ENCODE measurements at regions of chr9 and their contacts with region 1.

Region 1: DNA sequence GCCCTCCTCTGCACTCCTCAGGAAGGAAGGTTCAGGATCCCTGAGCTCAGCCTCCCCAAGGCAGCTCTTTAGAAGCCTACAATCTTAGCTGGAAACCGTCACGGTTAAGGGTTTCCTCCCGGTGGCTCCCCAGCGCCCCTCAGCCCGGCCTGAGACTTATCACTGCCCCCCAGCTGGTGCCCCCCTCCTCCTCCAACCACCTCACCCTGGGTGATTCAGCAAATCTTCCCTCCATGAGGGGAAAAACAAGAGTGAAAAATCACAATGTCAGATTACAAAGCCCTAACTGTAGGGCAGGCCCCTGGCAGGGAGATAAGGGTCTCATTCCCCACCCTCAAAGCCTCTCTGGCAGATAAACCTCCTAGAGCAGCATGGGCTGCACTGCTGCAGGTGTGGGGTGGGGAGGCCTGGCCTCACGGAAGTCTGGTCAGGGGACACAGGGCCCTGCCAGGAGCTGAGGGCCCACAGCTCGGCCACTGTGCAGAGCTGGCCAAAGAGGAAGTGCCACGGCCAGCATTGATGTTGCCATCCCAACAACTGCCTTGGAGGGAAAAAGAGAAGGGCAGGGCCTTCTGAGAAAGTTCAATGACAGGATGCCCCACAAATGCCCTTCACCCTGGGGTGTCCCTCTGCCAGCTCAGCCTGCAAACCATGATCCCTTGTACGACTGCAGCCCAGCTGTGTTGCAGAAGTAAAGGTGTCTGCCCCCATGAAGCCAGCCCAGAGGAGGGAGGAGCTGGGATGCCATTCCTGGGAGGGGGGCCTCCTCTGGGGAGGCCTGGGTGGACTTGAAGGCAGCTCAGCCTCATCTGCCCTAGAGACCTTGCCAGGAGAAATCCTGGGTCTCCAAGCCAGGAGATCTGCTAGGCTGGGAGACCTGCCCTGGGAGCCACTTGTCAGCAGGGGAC is 25.9 kb downstream of the GFI1B start:
- DNase-seq: no peak

Region 2: GRCh38 chr9:133023117-133023890 is 19.0 kb after region 1 on chr9:
- CTCF ChIA-PET with region 1: interaction called, 18 read pairs
- POLR2A ChIA-PET with region 1: no interaction called
- DNase-seq: no peak